CD8-positive, alpha-beta T cell (primary cell): ENCODE measurements at regions of chr9 and their contacts with region 1.

Region 1: GRCh38 chr9:79477955-79478771 is 93.6 kb upstream of the TLE4 start:
- DNase-seq: peak in 8 of 9 experiments; percentile 7 to 66 (median 46)
- ATAC-seq: peak; percentile 62
- H3K4me3 ChIP-seq: no peak overlapping the region
- H3K4me3 Mint-ChIP-seq: no peak overlapping the region
- H3K27ac ChIP-seq: no peak overlapping the region
- H3K27ac Mint-ChIP-seq: no peak overlapping the region
- H3K4me1 ChIP-seq: no peaks in the 10 kb centered on the region
- H3K4me1 Mint-ChIP-seq: peaks cover 7% of the 10 kb centered on the region
- H3K27me3 ChIP-seq: no peaks in the 10 kb centered on the region
- H3K27me3 Mint-ChIP-seq: no peaks in the 10 kb centered on the region
- CTCF ChIP-seq: peak; percentile 43

Region 2: DNA sequence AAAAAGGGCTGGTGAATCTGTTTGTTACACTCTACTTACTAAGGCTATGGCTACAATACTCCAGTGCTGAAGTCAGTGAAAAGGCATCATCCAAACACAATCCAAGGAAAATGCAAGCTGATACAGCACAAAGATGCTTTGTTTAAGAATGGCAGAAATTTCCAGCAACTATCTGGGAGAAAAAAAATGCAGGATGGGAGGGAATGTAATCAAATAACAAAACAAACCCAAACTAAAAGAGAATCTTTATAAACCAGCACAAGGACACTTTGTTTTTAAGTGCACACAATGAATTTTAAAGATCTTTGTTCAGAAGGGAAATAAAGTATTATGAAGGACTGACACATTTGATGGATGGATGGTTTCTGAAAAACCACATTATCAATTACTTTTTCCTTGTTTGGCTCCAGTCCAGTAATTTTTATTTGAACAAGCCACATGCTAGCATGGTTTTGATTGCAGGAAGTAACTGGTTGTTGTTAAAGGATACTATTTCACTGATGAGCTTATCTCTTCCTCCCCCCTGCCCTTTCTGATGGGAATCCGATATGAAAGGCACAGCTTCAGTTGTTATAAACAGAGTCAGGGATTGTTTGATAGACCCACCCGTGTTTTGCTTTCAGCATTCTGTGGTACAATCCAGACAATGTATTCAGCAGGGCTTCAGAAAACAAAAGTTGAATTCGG is 81.5 kb after region 1 on chr9:
- CTCF ChIA-PET with region 1: no interaction called
- POLR2A ChIA-PET with region 1: no interaction called
- intact Hi-C with region 1: loop called in 1 of 2 experiments (anchors 5 kb)
- DNase-seq: no peak
- ATAC-seq: no peak
- H3K4me3 ChIP-seq: no peak overlapping the region
- H3K4me3 Mint-ChIP-seq: no peak overlapping the region
- H3K27ac ChIP-seq: no peak overlapping the region
- H3K27ac Mint-ChIP-seq: no peak overlapping the region
- H3K4me1 ChIP-seq: no peaks in the 10 kb centered on the region
- H3K4me1 Mint-ChIP-seq: no peaks in the 10 kb centered on the region
- H3K27me3 ChIP-seq: peaks cover 0 to 5% of the 10 kb centered on the region in 2 experiments
- H3K27me3 Mint-ChIP-seq: peaks cover 4% of the 10 kb centered on the region
- CTCF ChIP-seq: no peak

Region 3: GRCh38 chr9:79673614-79674013 is 195.5 kb after region 1 on chr9:
- CTCF ChIA-PET with region 1: no interaction called
- POLR2A ChIA-PET with region 1: no interaction called
- intact Hi-C with region 1: loop called in 1 of 2 experiments (anchors 5 kb)
- DNase-seq: peak in 2 of 9 experiments; percentile 10 to 31
- ATAC-seq: no peak
- H3K4me3 ChIP-seq: no peak overlapping the region
- H3K4me3 Mint-ChIP-seq: no peak overlapping the region
- H3K27ac ChIP-seq: no peak overlapping the region
- H3K27ac Mint-ChIP-seq: no peak overlapping the region
- H3K4me1 ChIP-seq: peaks cover 12% of the 10 kb centered on the region
- H3K4me1 Mint-ChIP-seq: peaks cover 56% of the 10 kb centered on the region
- H3K27me3 ChIP-seq: no peaks in the 10 kb centered on the region
- H3K27me3 Mint-ChIP-seq: no peaks in the 10 kb centered on the region
- CTCF ChIP-seq: no peak

Region 4: GRCh38 chr9:79719989-79720388 is 241.8 kb after region 1 on chr9:
- CTCF ChIA-PET with region 1: no interaction called
- POLR2A ChIA-PET with region 1: no interaction called
- intact Hi-C with region 1: loop called in 1 of 2 experiments (anchors 5 kb)
- DNase-seq: no peak
- ATAC-seq: no peak
- H3K4me3 ChIP-seq: no peak overlapping the region
- H3K4me3 Mint-ChIP-seq: no peak overlapping the region
- H3K27ac ChIP-seq: no peak overlapping the region
- H3K27ac Mint-ChIP-seq: no peak overlapping the region
- H3K4me1 ChIP-seq: no peaks in the 10 kb centered on the region
- H3K4me1 Mint-ChIP-seq: no peaks in the 10 kb centered on the region
- H3K27me3 ChIP-seq: no peaks in the 10 kb centered on the region
- H3K27me3 Mint-ChIP-seq: no peaks in the 10 kb centered on the region
- CTCF ChIP-seq: no peak

Region 5: DNA sequence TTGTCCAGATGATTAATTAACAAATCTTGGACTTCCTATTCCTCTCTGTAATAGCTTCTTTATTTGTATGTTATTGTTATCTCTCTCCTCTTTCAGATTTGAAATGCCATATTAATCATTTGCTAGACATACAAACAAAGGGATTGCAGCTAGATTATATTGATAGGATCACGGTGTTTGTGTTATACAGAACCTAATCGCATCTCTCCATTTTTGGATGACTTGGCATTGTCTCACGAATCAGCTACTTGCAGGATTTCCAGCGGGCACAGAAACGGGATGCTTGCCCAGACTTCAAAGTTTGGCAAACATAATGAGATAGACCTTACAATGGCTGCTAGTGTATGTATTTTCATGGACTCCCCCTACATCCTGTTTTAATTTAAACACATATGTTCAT is 461.7 kb after region 1 on chr9:
- CTCF ChIA-PET with region 1: interaction called, 3 read pairs
- POLR2A ChIA-PET with region 1: no interaction called
- intact Hi-C with region 1: loop called in 1 of 2 experiments (anchors 5 kb)
- DNase-seq: no peak
- ATAC-seq: no peak
- H3K4me3 ChIP-seq: no peak overlapping the region
- H3K4me3 Mint-ChIP-seq: no peak overlapping the region
- H3K27ac ChIP-seq: no peak overlapping the region
- H3K27ac Mint-ChIP-seq: no peak overlapping the region
- H3K4me1 ChIP-seq: no peaks in the 10 kb centered on the region
- H3K4me1 Mint-ChIP-seq: no peaks in the 10 kb centered on the region
- H3K27me3 ChIP-seq: no peaks in the 10 kb centered on the region
- H3K27me3 Mint-ChIP-seq: no peaks in the 10 kb centered on the region
- CTCF ChIP-seq: no peak

Region 6: GRCh38 chr9:80175286-80176150 is 697.4 kb after region 1 on chr9:
- CTCF ChIA-PET with region 1: no interaction called
- POLR2A ChIA-PET with region 1: no interaction called
- intact Hi-C with region 1: loop called in 1 of 2 experiments (anchors 10 kb)
- DNase-seq: peak in 2 of 9 experiments; percentile 18 to 36
- ATAC-seq: no peak
- H3K4me3 ChIP-seq: no peak overlapping the region
- H3K4me3 Mint-ChIP-seq: no peak overlapping the region
- H3K27ac ChIP-seq: no peak overlapping the region
- H3K27ac Mint-ChIP-seq: no peak overlapping the region
- H3K4me1 ChIP-seq: no peaks in the 10 kb centered on the region
- H3K4me1 Mint-ChIP-seq: no peaks in the 10 kb centered on the region
- H3K27me3 ChIP-seq: peaks cover 0 to 4% of the 10 kb centered on the region in 2 experiments
- H3K27me3 Mint-ChIP-seq: peaks cover 5% of the 10 kb centered on the region
- CTCF ChIP-seq: peak; percentile 78